ENCODE measurements at regions of chrX and their contacts with region 1.

Region 1: DNA sequence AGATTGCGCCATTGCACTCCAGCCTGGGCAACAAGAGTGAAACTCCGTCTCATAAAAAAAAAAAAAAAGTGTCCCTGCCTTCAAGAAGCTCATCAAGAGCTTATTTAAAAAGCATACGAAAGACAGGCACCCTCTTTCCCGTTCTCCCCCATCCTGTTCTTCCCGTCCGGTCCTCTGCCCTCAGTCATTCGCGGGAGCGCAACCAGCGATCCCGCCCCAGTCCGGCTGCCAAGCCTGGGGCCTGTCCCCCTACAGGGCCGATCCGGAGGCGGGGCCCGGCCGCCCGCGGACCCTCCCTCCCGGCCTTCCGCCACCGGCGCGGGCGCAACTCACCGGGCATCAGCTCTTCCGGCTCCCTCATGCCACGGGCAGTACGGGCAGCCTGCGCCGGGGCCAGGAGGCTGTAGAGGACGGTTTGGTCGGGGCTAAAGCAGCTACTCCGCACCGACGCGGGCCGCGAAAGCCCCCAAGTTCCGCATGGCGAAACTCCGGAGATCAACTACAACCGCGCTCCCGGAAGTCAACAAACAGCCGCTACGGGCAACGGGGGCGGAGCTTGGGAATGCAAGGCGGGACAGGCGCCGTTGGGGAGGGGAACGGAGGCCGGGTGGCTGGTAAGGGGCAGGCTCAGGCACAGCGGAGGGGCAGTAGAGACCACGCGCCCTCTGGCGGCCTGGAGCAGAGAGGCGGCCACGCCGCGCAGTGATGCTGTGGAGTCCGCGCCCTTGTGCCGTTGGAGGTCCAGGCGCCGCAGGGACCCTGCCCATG is at the start of gene RPGR:
- DNase-seq: no peak
- H3K4me3 ChIP-seq: peak within 1 kb of the TSS; percentile 70
- CTCF ChIP-seq: peak; percentile 90

Region 2: GRCh38 chrX:38192007-38192810 is 135.0 kb before region 1 on chrX:
- CTCF ChIA-PET with region 1: interaction called, 21 read pairs
- POLR2A ChIA-PET with region 1: no interaction called
- DNase-seq: no peak
- H3K4me3 ChIP-seq: no peak overlapping the region
- CTCF ChIP-seq: peak; percentile 33

Region 3: DNA sequence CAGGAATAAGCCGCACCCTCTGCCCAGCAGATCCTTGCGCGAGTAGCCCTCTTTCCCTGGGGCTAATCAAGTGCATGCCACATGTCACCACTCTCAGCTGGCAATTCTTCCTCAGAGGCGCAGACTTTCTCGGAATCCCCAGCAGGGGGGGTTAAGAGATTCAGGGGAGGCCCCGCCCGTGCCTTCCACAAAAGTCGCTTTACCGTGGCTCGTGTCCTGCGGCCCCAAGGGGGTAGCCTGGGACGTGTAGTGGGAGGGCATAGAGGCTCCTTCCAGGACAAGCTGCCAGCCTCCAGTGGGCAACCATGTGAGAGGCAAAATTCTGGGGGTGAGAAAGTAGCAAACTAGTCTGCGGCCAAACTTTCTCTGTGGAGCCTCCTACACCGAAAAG is 107.2 kb before region 1 on chrX:
- CTCF ChIA-PET with region 1: interaction called, 18 read pairs
- POLR2A ChIA-PET with region 1: interaction called, 3 read pairs
- DNase-seq: no peak
- H3K4me3 ChIP-seq: peak overlapping the region; percentile 65
- CTCF ChIP-seq: peak; percentile 36

Region 4: GRCh38 chrX:38304010-38304409 is 23.2 kb before region 1 on chrX:
- CTCF ChIA-PET with region 1: interaction called, 15 read pairs
- POLR2A ChIA-PET with region 1: no interaction called
- DNase-seq: no peak
- H3K4me3 ChIP-seq: no peak overlapping the region
- CTCF ChIP-seq: peak; percentile 10